Psoas muscle (tissue), 8 donors: ENCODE measurements at regions of chr12 and their contacts with region 1.

Region 1: GRCh38 chr12:15268927-15269552 is 47.8 kb upstream of the RERG start:
- DNase-seq: no peak
- ATAC-seq: peak; percentile 77 to 86 (median 82)
- H3K4me3 ChIP-seq: no peak overlapping the region
- H3K27ac ChIP-seq: no peak overlapping the region
- H3K4me1 ChIP-seq: no peaks in the 10 kb centered on the region
- H3K27me3 ChIP-seq: no peaks in the 10 kb centered on the region
- CTCF ChIP-seq: peak; percentile 79

Region 2: GRCh38 chr12:15052691-15053090 is 216.3 kb before region 1 on chr12:
- intact Hi-C with region 1: no loop called
- DNase-seq: no peak
- ATAC-seq: no peak
- H3K4me3 ChIP-seq: no peak overlapping the region
- H3K27ac ChIP-seq: no peak overlapping the region
- H3K4me1 ChIP-seq: no peaks in the 10 kb centered on the region
- H3K27me3 ChIP-seq: no peaks in the 10 kb centered on the region
- CTCF ChIP-seq: no peak

Region 3: DNA sequence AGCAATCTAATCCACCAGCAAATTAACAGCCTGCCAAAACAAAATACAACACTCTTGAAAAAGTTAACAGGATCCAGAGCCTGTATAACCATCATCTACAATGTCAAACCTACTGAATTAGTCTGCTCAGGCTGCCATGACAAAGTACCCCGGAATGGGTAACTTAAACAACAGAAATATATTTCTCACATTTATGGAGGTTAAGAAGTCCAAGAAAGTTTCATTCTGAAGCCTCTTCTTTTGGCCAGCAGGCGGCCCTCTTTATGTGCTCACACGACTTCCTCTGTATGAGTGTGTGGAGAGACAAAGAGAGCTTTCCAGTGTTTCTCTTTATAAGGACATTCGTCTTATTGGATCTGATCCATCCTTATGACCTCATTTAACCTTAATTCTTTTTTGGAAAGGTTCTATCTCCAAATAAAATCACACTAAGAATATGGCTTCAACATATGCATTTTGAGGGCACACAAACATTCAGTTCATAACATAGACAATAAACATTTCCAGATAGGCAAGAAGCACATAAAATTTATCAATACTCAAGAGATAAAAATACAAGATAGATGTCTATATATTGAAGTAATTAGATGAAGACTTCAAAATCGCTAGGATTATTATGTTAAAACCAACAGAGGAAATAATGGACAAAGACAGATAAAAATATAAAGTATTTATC is 41.9 kb before region 1 on chr12:
- intact Hi-C with region 1: loop called (anchors 2 to 5 kb)
- DNase-seq: peak; percentile 46 to 56
- ATAC-seq: peak in 3 of 4 donors; percentile 48 to 65 (median 64)
- H3K4me3 ChIP-seq: no peak overlapping the region
- H3K27ac ChIP-seq: no peak overlapping the region
- H3K4me1 ChIP-seq: no peaks in the 10 kb centered on the region
- H3K27me3 ChIP-seq: peaks cover 0 to 2% (median 0%) of the 10 kb centered on the region in 3 donors
- CTCF ChIP-seq: peak; percentile 66

Region 4: DNA sequence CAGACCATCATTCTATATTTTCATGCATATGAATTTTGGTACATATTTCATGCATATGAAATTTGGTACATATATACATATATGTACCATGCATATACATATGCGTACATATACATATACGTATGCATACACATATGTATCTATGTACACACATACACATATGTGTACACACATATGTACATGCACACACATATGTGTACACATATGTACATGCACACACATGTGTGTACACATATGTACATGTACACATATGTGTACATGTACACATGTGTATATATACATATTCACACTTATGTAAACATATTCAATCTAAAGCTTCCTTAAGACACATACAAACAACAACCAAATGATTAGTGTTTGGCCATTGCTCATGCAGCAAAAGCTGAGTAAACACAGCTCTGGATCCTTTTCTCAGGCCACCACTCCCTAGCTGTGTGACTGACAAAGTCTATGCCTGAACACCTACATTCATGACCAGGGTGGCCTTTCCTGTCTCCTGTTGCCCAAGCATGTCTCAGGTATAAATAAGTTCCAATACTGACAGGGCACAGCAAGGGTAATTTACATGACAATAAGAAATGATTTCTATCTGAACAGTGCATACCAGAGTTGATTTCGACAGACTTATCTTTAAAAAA is 51.7 kb after region 1 on chr12:
- intact Hi-C with region 1: no loop called
- DNase-seq: no peak
- ATAC-seq: no peak
- H3K4me3 ChIP-seq: no peak overlapping the region
- H3K27ac ChIP-seq: no peak overlapping the region
- H3K4me1 ChIP-seq: no peaks in the 10 kb centered on the region
- H3K27me3 ChIP-seq: peaks cover 2 to 39% (median 5%) of the 10 kb centered on the region in 3 donors
- CTCF ChIP-seq: no peak

Region 5: GRCh38 chr12:15423629-15424028 is 154.6 kb after region 1 on chr12:
- intact Hi-C with region 1: no loop called
- DNase-seq: no peak
- ATAC-seq: no peak
- H3K4me3 ChIP-seq: no peak overlapping the region
- H3K27ac ChIP-seq: no peak overlapping the region
- H3K4me1 ChIP-seq: no peaks in the 10 kb centered on the region
- H3K27me3 ChIP-seq: no peaks in the 10 kb centered on the region
- CTCF ChIP-seq: no peak